Sciatic nerve (tissue), 2 donors: ENCODE measurements at regions of chr20 and their contacts with region 1.

Region 1: GRCh38 chr20:17431621-17432364 is 99.4 kb downstream of the BFSP1 start:
- DNase-seq: peak; percentile 77
- ATAC-seq: no peak

Region 2: DNA sequence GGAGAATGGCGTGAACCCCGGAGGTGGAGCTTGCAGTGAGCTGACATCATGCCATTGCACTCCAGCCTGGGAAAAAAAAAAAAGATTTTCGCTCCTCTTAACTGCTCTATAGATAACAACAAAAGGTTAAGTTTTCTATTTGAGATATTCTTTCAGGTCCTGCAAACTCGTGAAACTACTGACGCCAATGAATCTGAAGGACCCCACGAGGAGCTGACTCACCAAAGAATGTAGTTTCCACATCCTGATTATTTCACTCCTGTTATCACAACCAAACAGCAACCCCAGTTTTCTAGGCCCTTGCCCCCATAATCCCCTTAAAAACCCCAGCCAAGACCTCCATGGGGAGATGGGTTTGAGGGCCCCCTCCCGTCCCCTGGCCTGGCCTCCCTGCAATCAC is 624.9 kb before region 1 on chr20:
- intact Hi-C with region 1: loop called (anchors 5 kb)
- DNase-seq: no peak
- ATAC-seq: no peak

Region 3: GRCh38 chr20:17579369-17580039 is 147.7 kb after region 1 on chr20:
- intact Hi-C with region 1: no loop called
- DNase-seq: no peak
- ATAC-seq: no peak